Ascending aorta (tissue), 2 donors: ENCODE measurements at regions of chr10 and their contacts with region 1.

Region 1: GRCh38 chr10:35872671-35873070 is 230.6 kb upstream of the FZD8 start:
- DNase-seq: no peak
- H3K4me3 ChIP-seq: no peak overlapping the region
- H3K27ac ChIP-seq: no peak overlapping the region
- H3K4me1 ChIP-seq: no peaks in the 10 kb centered on the region
- H3K27me3 ChIP-seq: no peaks in the 10 kb centered on the region
- CTCF ChIP-seq: no peak

Region 2: DNA sequence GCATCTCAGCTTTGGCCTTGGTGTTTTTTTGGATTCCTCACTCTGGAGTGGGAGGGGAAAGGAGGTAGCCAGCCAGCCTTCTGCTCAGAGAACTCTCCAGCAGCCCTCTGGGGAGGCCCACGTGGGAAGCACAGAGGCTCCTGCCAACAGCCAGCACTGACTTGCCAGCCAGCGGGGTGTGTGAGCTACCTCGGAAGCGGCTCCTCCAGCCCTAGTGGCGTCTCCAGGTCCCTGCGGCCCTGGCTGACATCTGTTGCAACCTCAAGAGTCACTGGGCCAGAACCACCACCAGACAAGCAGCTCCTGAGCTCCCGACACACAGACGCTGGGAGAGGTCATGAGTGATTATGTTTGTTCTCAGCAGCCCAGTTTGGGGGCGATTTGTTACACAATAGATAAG is 50.4 kb before region 1 on chr10:
- intact Hi-C with region 1: loop called (anchors 5 kb)
- DNase-seq: peak; percentile 57 to 96
- H3K4me3 ChIP-seq: no peak overlapping the region
- H3K27ac ChIP-seq: peak overlapping the region; percentile 73 to 78
- H3K4me1 ChIP-seq: peaks cover 9 to 24% of the 10 kb centered on the region in 2 donors
- H3K27me3 ChIP-seq: no peaks in the 10 kb centered on the region
- CTCF ChIP-seq: peak; percentile 42 to 59 (median 53)